ENCODE measurements at regions of chr18 and their contacts with region 1.

Region 1: DNA sequence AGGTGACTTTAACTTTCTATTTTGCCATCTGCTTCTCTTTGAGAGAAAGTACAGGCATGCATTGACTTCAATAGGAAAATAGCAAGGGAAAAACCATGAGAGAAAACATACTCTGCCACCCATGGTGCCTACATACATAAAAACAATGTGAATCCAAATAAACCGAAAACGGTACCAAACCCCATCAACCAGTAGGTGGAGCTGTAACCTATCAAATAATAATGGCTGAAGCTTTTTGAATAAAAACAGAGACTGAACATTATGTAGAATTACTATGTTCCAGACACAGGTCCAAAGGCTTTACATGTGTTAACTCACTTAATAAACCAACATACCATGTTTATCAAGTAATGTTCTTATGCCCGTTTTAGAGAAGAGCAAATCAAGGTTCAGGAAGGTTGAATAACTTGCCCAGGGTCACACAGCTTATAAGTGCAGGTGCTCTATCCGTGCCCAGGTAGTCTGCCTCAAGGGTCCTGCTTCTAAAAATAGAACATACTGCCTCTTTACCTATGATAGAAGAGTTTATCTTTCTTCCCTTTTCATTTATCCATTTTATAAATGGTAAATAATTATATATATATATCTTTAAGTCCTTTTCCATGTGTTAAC is 293.9 kb upstream of the SYT4 start:
- DNase-seq: peak in 2 of 10 donors; percentile 30 to 52
- H3K4me3 ChIP-seq: no peak overlapping the region
- H3K27ac ChIP-seq: no peak overlapping the region
- H3K27me3 ChIP-seq: peaks cover 0 to 7% (median 0%) of the 10 kb centered on the region in 45 donors
- CTCF ChIP-seq: peak; percentile 68 to 94 (median 82)

Region 2: GRCh38 chr18:42053188-42053781 is 1517.9 kb before region 1 on chr18:
- intact Hi-C with region 1: loop called in 1 of 2 experiments (anchors 10 kb)
- DNase-seq: peak in 7 of 10 donors; percentile 35 to 72 (median 48)
- H3K4me3 ChIP-seq: peak overlapping the region in 23 of 59 donors; percentile 6 to 42 (median 28)
- H3K27ac ChIP-seq: peak overlapping the region in 8 of 59 donors; percentile 6 to 64 (median 28)
- H3K27me3 ChIP-seq: no peaks in the 10 kb centered on the region
- CTCF ChIP-seq: peak; percentile 79 to 99 (median 92)

Region 3: DNA sequence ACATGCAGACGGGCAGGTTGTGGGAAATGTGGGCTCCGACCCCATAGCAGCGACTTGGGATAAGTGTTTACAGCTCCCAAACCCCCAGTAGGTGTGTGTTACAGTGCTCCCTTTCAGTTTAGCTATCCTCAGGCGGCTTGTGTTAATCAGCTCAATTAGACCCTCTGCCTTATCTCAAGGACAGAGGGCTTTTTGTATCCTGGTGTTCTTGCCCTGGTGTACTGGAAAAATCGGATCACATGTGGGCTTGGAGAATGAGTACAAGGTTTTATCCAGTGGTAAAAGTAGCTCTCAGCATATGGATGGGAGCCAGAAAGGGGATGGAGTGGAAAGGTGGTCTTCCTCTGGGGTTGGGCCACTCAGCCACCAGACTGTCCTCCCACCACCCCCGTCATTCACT is 29.2 kb before region 1 on chr18:
- intact Hi-C with region 1: no loop called
- DNase-seq: no peak
- H3K4me3 ChIP-seq: no peak overlapping the region
- H3K27ac ChIP-seq: no peak overlapping the region
- H3K27me3 ChIP-seq: peaks cover 0 to 3% (median 0%) of the 10 kb centered on the region in 45 donors
- CTCF ChIP-seq: no peak

Region 4: GRCh38 chr18:43587538-43588153 is 16.5 kb after region 1 on chr18:
- intact Hi-C with region 1: loop called in 1 of 2 experiments (anchors 2 kb)
- DNase-seq: peak in 1 of 10 donors; percentile 35
- H3K4me3 ChIP-seq: no peak overlapping the region
- H3K27ac ChIP-seq: no peak overlapping the region
- H3K27me3 ChIP-seq: no peaks in the 10 kb centered on the region
- CTCF ChIP-seq: peak; percentile 68 to 97 (median 83)

Region 5: DNA sequence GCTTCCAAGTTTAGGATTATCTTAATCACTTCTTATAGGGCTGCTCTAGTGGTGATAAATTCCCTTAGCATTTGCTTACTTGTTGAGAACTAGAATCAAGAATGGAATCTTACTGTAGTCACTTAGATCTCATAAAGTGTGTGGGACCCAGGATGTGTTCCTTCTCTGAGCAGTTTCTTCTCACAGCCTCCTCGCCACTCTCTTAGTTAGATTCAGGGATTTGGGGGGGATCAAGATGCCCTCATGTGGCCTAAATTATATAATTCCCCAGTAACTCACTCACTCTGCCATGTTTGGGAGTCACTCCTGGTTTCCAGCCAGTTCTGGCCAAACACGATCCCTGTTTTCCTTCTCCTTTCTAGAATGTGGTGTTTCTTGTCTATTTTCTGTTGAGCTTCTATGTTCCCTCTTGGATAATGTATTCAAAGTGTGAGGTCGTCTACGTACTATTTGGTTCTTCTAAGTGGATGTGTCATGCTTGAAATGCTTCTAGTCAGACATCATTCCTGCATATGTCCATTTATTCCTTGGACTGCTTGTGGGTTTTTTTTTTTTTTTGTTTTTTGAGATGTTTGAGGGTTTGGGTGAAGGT is 121.0 kb after region 1 on chr18:
- intact Hi-C with region 1: no loop called
- DNase-seq: no peak
- H3K4me3 ChIP-seq: no peak overlapping the region
- H3K27ac ChIP-seq: no peak overlapping the region
- H3K27me3 ChIP-seq: no peaks in the 10 kb centered on the region
- CTCF ChIP-seq: no peak

Region 6: DNA sequence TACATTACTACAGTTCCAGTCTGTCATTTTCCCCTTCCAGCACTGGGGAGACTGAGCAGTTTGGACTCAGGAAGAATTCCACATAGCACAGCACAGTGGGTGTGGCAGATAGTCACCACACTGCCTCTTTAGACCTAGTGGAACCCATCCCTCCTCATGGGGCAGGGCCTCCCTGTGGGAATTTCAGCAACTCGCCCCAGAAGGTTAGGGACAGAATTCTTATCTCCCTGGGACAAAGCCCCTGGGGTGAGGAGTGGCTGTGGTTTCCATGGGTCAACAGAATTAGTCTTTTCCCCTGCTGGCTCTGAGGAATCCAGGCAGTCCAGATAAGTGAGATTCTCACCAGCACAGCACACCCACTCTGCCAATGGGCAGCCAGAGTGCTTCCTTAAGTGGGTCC is 148.2 kb after region 1 on chr18:
- intact Hi-C with region 1: no loop called
- DNase-seq: no peak
- H3K4me3 ChIP-seq: no peak overlapping the region
- H3K27ac ChIP-seq: no peak overlapping the region
- H3K27me3 ChIP-seq: peaks cover 0 to 7% (median 0%) of the 10 kb centered on the region in 45 donors
- CTCF ChIP-seq: no peak

Measured in dorsolateral prefrontal cortex (tissue), 120 donors.